H1 (cell line): ENCODE measurements at regions of chr1 and their contacts with region 1.

Region 1: DNA sequence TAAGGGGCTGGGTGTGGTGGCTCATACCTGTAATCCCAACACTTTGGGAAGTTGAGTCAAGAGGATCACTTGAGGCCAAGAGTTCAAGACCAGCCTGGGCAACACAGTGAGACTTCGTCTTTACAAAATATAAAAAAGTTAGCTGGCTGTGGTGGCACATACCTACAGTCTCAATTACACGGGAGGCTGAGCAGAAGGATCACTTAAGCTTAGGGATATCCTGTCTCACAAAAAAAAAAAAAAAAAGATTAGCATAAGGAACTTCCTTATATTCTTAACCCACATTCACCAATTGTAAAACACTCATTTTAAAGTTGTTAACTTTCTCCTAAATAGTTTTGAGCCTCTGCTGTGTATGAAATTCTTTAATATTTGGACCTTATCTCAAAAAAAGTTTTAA is 53.1 kb downstream of the ABCD3 start:
- DNase-seq: no peak
- H3K4me3 ChIP-seq: no peak overlapping the region
- H3K27ac ChIP-seq: no peak overlapping the region
- H3K4me1 ChIP-seq: peaks cover 0 to 2% (median 0%) of the 10 kb centered on the region in 4 experiments; a peak in 1 of 7 replicates
- H3K27me3 ChIP-seq: no peaks in the 10 kb centered on the region
- CTCF ChIP-seq: no peak
- EP300 ChIP-seq: no peak
- POLR2A ChIP-seq: no peak
- RAD21 ChIP-seq: no peak

Region 2: DNA sequence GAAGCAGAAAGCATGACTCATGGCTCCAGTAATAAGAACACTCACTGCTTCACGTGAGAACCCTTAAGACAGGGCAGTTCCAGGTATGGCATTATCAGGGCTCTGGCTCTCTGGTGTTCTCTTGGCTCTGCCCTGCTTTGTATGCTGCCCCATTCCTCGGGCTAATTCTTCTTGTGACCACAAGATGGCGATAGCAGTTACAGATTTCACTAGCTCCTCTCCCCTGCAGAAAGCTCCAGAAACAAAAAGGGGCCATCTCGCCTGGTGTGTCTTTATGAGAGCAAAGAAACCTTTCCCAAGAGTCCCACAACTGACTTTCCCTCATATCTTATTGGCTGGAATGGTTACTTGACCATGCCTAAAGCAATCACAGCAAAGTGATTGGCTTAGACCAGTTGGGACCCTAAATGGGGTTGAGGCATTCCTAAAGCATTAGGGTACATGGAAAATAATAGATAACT is 10.2 kb after region 1 on chr1:
- CTCF ChIA-PET with region 1: interaction called, 16 read pairs
- POLR2A ChIA-PET with region 1: no interaction called
- DNase-seq: peak; percentile 25 to 50
- H3K4me3 ChIP-seq: no peak overlapping the region
- H3K27ac ChIP-seq: no peak overlapping the region
- H3K4me1 ChIP-seq: no peaks in the 10 kb centered on the region
- H3K27me3 ChIP-seq: no peaks in the 10 kb centered on the region
- CTCF ChIP-seq: peak; percentile 46 to 89 (median 78)
- EP300 ChIP-seq: no peak
- POLR2A ChIP-seq: no peak
- RAD21 ChIP-seq: peak; percentile 73 to 81

Region 3: GRCh38 chr1:94496076-94496755 is 24.9 kb after region 1 on chr1:
- CTCF ChIA-PET with region 1: no interaction called
- POLR2A ChIA-PET with region 1: no interaction called
- DNase-seq: no peak
- H3K4me3 ChIP-seq: no peak overlapping the region
- H3K27ac ChIP-seq: no peak overlapping the region
- H3K4me1 ChIP-seq: no peaks in the 10 kb centered on the region
- H3K27me3 ChIP-seq: no peaks in the 10 kb centered on the region
- CTCF ChIP-seq: no peak
- EP300 ChIP-seq: no peak
- POLR2A ChIP-seq: no peak
- RAD21 ChIP-seq: no peak